MCF 10A (cell line): ENCODE measurements at regions of chr1 and their contacts with region 1.

Region 1: GRCh38 chr1:206912445-206913095 is 9.2 kb downstream of the FCMR start:
- DNase-seq: peak; percentile 96
- H3K4me3 Mint-ChIP-seq: no peak overlapping the region
- H3K27ac Mint-ChIP-seq: no peak overlapping the region
- H3K4me1 Mint-ChIP-seq: peaks cover 28% of the 10 kb centered on the region
- H3K27me3 Mint-ChIP-seq: peaks cover 43% of the 10 kb centered on the region
- CTCF ChIP-seq: peak; percentile 94

Region 2: GRCh38 chr1:206674745-206675175 is 237.8 kb before region 1 on chr1:
- CTCF ChIA-PET with region 1: interaction called, 17 read pairs
- POLR2A ChIA-PET with region 1: interaction called, 11 read pairs
- intact Hi-C with region 1: no loop called
- DNase-seq: peak; percentile 100
- H3K4me3 Mint-ChIP-seq: peak overlapping the region; percentile 48
- H3K27ac Mint-ChIP-seq: no peak overlapping the region
- H3K4me1 Mint-ChIP-seq: peaks cover 18% of the 10 kb centered on the region
- H3K27me3 Mint-ChIP-seq: no peaks in the 10 kb centered on the region
- CTCF ChIP-seq: no peak

Region 3: GRCh38 chr1:206766251-206766856 is 146.2 kb before region 1 on chr1:
- CTCF ChIA-PET with region 1: interaction called, 28 read pairs
- POLR2A ChIA-PET with region 1: no interaction called
- intact Hi-C with region 1: no loop called
- DNase-seq: peak; percentile 29
- H3K4me3 Mint-ChIP-seq: no peak overlapping the region
- H3K27ac Mint-ChIP-seq: no peak overlapping the region
- H3K4me1 Mint-ChIP-seq: no peaks in the 10 kb centered on the region
- H3K27me3 Mint-ChIP-seq: peaks cover 32% of the 10 kb centered on the region
- CTCF ChIP-seq: no peak

Region 4: GRCh38 chr1:206846487-206846886 is 66.1 kb before region 1 on chr1:
- CTCF ChIA-PET with region 1: interaction called, 18 read pairs
- POLR2A ChIA-PET with region 1: interaction called, 7 read pairs
- intact Hi-C with region 1: no loop called
- DNase-seq: peak; percentile 34
- H3K4me3 Mint-ChIP-seq: no peak overlapping the region
- H3K27ac Mint-ChIP-seq: no peak overlapping the region
- H3K4me1 Mint-ChIP-seq: peaks cover 21% of the 10 kb centered on the region
- H3K27me3 Mint-ChIP-seq: peaks cover 23% of the 10 kb centered on the region
- CTCF ChIP-seq: no peak

Region 5: DNA sequence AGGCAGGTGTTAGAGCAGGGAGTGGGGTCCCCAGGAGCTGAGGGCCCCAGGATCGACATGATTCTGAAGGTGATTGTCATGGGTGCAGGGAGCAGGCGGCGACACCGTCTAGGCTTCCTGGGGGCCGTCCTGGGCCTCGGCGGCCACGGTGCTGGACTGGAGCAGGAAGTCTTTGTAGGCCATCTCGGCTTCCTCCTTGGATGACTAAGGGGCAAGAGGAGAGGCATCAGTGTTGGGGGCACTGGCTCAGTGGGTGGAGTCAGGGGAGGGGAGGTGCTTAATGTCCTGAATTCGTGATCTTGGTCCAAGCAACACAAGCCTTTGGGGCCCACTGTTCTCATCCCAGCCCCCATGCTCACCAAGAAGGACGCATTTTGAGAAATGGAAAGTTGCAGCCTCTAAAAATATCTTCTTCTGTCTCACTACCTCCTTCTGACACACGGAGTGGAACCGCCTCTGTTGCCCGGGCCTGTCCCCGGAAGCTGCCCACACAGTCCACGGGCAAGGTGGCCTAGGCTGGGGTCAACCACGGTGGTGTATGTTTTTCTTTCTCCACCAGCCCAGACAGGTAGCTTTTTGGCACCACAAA is 17.7 kb after region 1 on chr1:
- CTCF ChIA-PET with region 1: interaction called, 21 read pairs
- POLR2A ChIA-PET with region 1: no interaction called
- intact Hi-C with region 1: no loop called
- DNase-seq: no peak
- H3K4me3 Mint-ChIP-seq: no peak overlapping the region
- H3K27ac Mint-ChIP-seq: no peak overlapping the region
- H3K4me1 Mint-ChIP-seq: no peaks in the 10 kb centered on the region
- H3K27me3 Mint-ChIP-seq: no peaks in the 10 kb centered on the region
- CTCF ChIP-seq: no peak

Region 6: GRCh38 chr1:206992790-206993189 is 80.2 kb after region 1 on chr1:
- CTCF ChIA-PET with region 1: interaction called, 15 read pairs
- POLR2A ChIA-PET with region 1: interaction called, 3 read pairs
- intact Hi-C with region 1: no loop called
- DNase-seq: no peak
- H3K4me3 Mint-ChIP-seq: no peak overlapping the region
- H3K27ac Mint-ChIP-seq: no peak overlapping the region
- H3K4me1 Mint-ChIP-seq: no peaks in the 10 kb centered on the region
- H3K27me3 Mint-ChIP-seq: no peaks in the 10 kb centered on the region
- CTCF ChIP-seq: no peak

Region 7: DNA sequence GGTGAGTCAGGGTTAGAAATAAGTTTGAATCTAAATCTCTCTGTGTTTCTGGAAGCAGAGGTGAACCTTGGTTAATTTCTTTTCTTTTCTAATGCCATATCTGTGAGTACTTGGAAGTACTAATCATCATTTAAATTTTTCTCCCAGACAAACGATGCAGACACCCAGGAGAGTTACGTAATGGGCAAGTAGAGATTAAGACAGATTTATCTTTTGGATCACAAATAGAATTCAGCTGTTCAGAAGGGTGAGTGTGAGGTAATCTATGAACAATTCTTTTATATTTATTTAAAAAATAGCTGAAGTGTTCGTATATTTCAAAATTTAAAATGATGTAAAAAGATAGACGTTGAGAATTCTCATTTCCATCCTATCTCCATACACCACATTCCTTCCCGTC is 202.7 kb after region 1 on chr1:
- CTCF ChIA-PET with region 1: no interaction called
- POLR2A ChIA-PET with region 1: no interaction called
- intact Hi-C with region 1: no loop called
- DNase-seq: no peak
- H3K4me3 Mint-ChIP-seq: no peak overlapping the region
- H3K27ac Mint-ChIP-seq: no peak overlapping the region
- H3K4me1 Mint-ChIP-seq: no peaks in the 10 kb centered on the region
- H3K27me3 Mint-ChIP-seq: peaks cover 15% of the 10 kb centered on the region
- CTCF ChIP-seq: no peak